ENCODE measurements at regions of chr9 and their contacts with region 1.

Region 1: GRCh38 chr9:36174731-36175130 is 5.5 kb downstream of the CCIN start:
- DNase-seq: no peak
- H3K4me3 ChIP-seq: no peak overlapping the region
- H3K27me3 ChIP-seq: no peaks in the 10 kb centered on the region
- CTCF ChIP-seq: no peak

Region 2: DNA sequence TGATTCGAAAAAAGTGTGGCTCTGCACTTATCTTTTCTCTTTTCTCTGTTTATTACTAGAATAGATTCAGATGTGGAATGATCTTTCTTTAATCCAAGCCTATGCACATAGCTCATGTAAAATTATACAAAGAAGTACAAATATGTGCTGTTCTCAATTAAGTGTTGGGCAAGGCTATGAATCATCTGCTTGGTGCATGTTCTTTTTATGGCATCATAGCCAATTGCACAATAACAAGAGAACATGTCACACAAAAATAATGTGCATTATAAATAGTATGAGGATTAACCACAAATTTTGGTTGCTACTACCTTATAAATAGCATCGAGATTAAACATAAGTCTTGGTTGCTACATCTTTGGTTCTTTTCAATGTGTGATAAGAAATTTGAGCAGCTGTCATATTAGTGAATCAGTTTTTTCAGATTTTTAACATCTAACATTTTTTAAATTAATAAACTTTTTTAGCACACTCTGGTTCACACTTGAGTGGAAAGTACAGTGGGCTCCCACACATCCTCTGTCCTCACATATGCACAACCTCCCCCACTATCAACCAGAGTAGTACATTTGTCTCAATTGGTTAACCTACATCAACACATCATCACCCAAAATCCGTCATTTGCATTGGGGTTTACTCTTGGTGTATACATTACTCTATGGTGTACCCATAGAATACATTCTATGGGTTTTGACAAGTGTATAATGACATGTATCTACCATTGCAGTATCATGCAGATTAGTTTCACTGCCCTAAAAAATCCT is 144.8 kb before region 1 on chr9:
- CTCF ChIA-PET with region 1: no interaction called
- POLR2A ChIA-PET with region 1: no interaction called
- DNase-seq: peak; percentile 97
- H3K4me3 ChIP-seq: no peak overlapping the region
- H3K27me3 ChIP-seq: no peaks in the 10 kb centered on the region
- CTCF ChIP-seq: no peak

Region 3: DNA sequence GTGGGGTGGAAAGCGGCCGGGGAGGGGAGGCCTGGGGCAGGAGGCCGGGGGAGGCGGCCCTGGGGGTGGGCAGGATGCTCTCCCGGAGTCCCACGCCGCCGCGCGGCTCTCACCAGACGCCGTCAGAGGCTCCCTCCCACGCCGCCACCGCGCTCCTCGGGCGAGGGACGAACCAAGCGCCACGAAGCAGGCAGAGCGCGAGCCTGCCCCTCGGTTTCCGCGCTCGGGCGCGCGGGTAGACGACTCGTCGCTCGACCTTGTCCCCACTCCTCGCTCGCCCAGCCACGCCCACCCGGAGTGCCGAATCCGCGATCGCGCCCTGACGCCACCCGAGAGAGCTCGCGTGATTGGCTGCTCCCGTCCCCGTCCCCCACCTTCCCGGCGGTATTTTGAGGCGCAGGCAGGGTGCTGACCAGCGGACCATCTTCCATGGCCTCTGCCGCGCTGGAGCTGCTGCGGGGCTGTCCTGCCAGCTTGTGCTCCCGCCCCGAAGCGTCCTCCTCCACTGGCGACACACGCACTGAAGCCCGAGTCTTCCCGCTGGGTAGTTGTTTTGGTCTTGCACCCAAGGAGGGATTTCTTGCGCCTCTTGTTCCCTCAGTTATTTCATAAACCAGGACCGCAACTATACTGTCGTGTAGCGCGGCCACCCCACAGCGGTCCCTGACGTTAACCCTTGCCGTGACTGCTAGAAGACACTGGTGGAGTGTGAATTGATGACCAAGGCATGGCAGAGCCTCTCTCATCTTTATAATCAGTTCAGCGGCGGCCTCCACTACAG is 83.7 kb after region 1 on chr9 and contains the start of gene GNE:
- CTCF ChIA-PET with region 1: no interaction called
- POLR2A ChIA-PET with region 1: interaction called, 13 read pairs
- DNase-seq: peak; percentile 67
- H3K4me3 ChIP-seq: peak within 1 kb of the TSS; percentile 73
- H3K27me3 ChIP-seq: no peaks in the 10 kb centered on the region
- CTCF ChIP-seq: no peak
- polyA plus RNA-seq, gene GNE: 14.7 and 16.7 TPM in 2 replicates